HepG2 (cell line): ENCODE measurements at regions of chr4 and their contacts with region 1.

Region 1: DNA sequence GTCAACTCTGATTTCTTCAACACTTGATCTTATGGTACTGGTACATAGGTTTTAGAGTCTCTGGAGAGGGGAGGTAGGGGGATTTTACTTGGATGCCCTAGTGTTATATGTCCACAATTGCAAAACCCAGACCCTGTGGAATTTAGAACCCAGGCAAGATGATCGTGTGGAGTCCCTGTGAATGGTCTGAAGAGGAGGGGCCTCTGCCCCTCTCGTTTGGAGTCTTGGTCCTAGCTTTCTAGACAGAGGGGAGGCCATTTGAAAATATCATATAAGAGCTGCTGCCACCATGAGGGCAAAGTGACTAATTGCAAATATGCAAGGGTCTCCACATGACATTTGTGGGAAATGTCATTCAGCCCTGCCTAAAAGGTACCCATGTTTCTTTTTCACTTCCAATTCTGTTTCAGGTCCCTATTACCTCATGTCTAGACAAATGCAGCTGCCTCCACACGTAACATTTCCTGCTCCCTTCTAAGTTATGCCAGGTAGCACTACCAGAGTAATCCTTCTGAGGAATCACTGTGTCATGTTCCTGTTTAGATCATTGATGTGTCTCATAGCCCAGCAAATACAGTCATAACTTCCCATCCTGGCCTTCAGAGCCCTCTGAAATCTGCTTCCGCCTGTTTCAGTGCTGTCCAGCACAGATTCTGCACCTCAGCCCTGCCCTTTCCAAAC is 126.8 kb downstream of the KLHL8 start:
- DNase-seq: peak; percentile 56
- ATAC-seq: peak; percentile 83
- H3K4me3 ChIP-seq: no peak overlapping the region
- H3K27ac ChIP-seq: no peak overlapping the region
- H3K4me1 ChIP-seq: peaks cover 42% of the 10 kb centered on the region
- H3K27me3 ChIP-seq: no peaks in the 10 kb centered on the region
- CTCF ChIP-seq: peak; percentile 79
- EP300 ChIP-seq: no peak
- POLR2A ChIP-seq: no peak
- RAD21 ChIP-seq: peak; percentile 56; the same call in 1 of the 2 replicates

Region 2: GRCh38 chr4:86279293-86279960 is 814.2 kb before region 1 on chr4:
- CTCF ChIA-PET with region 1: no interaction called
- POLR2A ChIA-PET with region 1: no interaction called
- in situ Hi-C with region 1: no loop called
- intact Hi-C with region 1: no loop called
- DNase-seq: no peak
- ATAC-seq: no peak
- H3K4me3 ChIP-seq: no peak overlapping the region
- H3K27ac ChIP-seq: no peak overlapping the region
- H3K4me1 ChIP-seq: no peaks in the 10 kb centered on the region
- H3K27me3 ChIP-seq: no peaks in the 10 kb centered on the region
- CTCF ChIP-seq: no peak
- EP300 ChIP-seq: no peak
- POLR2A ChIP-seq: no peak
- RAD21 ChIP-seq: no peak

Region 3: GRCh38 chr4:86921608-86922252 is 171.9 kb before region 1 on chr4:
- CTCF ChIA-PET with region 1: interaction called, 23 read pairs
- POLR2A ChIA-PET with region 1: interaction called, 6 read pairs
- in situ Hi-C with region 1: loop called (anchors 5 kb)
- intact Hi-C with region 1: loop called (anchors 1 kb)
- DNase-seq: no peak
- ATAC-seq: no peak
- H3K4me3 ChIP-seq: no peak overlapping the region
- H3K27ac ChIP-seq: no peak overlapping the region
- H3K4me1 ChIP-seq: peaks cover 14% of the 10 kb centered on the region
- H3K27me3 ChIP-seq: no peaks in the 10 kb centered on the region
- CTCF ChIP-seq: no peak
- EP300 ChIP-seq: no peak
- POLR2A ChIP-seq: no peak
- RAD21 ChIP-seq: no peak

Region 4: GRCh38 chr4:86927843-86928395 is 165.7 kb before region 1 on chr4:
- CTCF ChIA-PET with region 1: interaction called, 23 read pairs
- POLR2A ChIA-PET with region 1: interaction called, 6 read pairs
- in situ Hi-C with region 1: loop called (anchors 5 kb)
- intact Hi-C with region 1: no loop called
- DNase-seq: peak; percentile 87
- ATAC-seq: peak; percentile 74
- H3K4me3 ChIP-seq: no peak overlapping the region
- H3K27ac ChIP-seq: no peak overlapping the region
- H3K4me1 ChIP-seq: peaks cover 21% of the 10 kb centered on the region
- H3K27me3 ChIP-seq: no peaks in the 10 kb centered on the region
- CTCF ChIP-seq: no peak
- EP300 ChIP-seq: peak in 1 of 2 experiments; percentile 60; a peak in 1 of 4 replicates
- POLR2A ChIP-seq: no peak
- RAD21 ChIP-seq: no peak

Region 5: DNA sequence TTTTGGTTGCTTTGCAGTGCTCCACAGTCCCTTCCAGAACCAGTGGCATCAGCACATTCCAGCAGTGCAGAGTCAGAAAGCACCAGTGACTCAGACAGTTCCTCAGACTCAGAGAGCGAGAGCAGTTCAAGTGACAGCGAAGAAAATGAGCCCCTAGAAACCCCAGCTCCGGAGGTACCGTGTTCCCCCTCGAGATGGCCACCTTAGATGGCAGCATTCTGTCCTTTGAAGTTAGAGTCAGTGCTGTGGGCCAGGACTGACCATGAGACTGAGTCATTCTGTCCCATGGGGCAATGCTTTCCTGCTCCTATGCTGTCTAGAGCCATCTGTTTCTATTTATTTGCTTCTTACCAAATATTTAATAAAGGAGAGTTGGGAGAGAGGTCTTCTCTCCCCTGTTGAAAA is 14.6 kb after region 1 on chr4:
- CTCF ChIA-PET with region 1: no interaction called
- POLR2A ChIA-PET with region 1: no interaction called
- in situ Hi-C with region 1: no loop called
- intact Hi-C with region 1: loop called (anchors 2 kb)
- DNase-seq: no peak
- ATAC-seq: no peak
- H3K4me3 ChIP-seq: no peak overlapping the region
- H3K27ac ChIP-seq: no peak overlapping the region
- H3K4me1 ChIP-seq: peaks cover 37% of the 10 kb centered on the region
- H3K27me3 ChIP-seq: no peaks in the 10 kb centered on the region
- CTCF ChIP-seq: no peak
- EP300 ChIP-seq: no peak
- POLR2A ChIP-seq: no peak
- RAD21 ChIP-seq: no peak